CD4-positive, alpha-beta T cell (primary cell): ENCODE measurements at regions of chr17 and their contacts with region 1.

Region 1: DNA sequence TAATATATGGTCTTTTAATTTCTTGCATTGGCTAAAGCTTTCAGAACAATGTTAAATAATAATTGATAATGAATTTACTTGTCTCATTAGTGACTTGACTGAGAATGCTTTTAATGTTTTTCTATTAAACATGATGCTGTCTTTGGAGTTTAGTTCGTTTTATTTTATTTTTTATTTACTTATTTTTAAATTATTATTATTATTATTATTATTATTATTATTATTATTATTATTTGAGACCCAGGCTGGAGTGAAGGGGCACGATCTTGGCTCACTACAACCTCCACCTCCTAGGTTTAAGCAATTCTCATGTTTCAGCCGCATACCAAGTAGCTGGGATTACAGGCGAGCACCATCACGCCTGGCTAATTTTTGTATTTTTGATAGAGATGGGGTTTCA is 4.4 kb downstream of the OR3A3 start:
- DNase-seq: no peak
- ATAC-seq: no peak
- H3K4me3 ChIP-seq: no peak overlapping the region
- H3K4me3 Mint-ChIP-seq: no peak overlapping the region
- H3K27ac ChIP-seq: no peak overlapping the region
- H3K27ac Mint-ChIP-seq: no peak overlapping the region
- H3K4me1 ChIP-seq: no peaks in the 10 kb centered on the region
- H3K4me1 Mint-ChIP-seq: no peaks in the 10 kb centered on the region
- H3K27me3 ChIP-seq: peaks cover 2 to 3% of the 10 kb centered on the region in 2 experiments
- H3K27me3 Mint-ChIP-seq: peaks cover 20% of the 10 kb centered on the region
- CTCF ChIP-seq: no peak

Region 2: DNA sequence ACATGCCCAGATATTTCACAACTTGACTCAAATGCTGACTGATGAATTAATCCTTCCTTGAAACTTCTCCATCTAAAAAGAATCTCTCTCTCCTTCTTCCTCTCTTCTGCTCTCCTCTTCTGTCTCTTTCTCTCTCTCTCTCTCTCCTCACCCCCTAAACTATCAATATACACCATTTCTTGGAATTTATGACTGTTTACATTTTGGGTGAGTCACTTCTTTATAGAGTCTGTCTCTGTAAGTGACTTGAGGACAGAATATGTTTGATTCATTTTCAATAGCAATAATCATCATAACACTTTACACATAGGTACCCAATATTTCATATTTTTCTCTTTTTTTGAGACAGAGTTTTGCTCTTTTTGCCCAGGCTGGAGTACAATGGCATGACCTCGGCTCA is 132.7 kb before region 1 on chr17:
- CTCF ChIA-PET with region 1: no interaction called
- POLR2A ChIA-PET with region 1: no interaction called
- intact Hi-C with region 1: loop called in 1 of 2 experiments (anchors 10 kb)
- DNase-seq: no peak
- ATAC-seq: no peak
- H3K4me3 ChIP-seq: no peak overlapping the region
- H3K4me3 Mint-ChIP-seq: no peak overlapping the region
- H3K27ac ChIP-seq: no peak overlapping the region
- H3K27ac Mint-ChIP-seq: no peak overlapping the region
- H3K4me1 ChIP-seq: no peaks in the 10 kb centered on the region
- H3K4me1 Mint-ChIP-seq: no peaks in the 10 kb centered on the region
- H3K27me3 ChIP-seq: no peaks in the 10 kb centered on the region
- H3K27me3 Mint-ChIP-seq: peaks cover 7% of the 10 kb centered on the region
- CTCF ChIP-seq: no peak

Region 3: DNA sequence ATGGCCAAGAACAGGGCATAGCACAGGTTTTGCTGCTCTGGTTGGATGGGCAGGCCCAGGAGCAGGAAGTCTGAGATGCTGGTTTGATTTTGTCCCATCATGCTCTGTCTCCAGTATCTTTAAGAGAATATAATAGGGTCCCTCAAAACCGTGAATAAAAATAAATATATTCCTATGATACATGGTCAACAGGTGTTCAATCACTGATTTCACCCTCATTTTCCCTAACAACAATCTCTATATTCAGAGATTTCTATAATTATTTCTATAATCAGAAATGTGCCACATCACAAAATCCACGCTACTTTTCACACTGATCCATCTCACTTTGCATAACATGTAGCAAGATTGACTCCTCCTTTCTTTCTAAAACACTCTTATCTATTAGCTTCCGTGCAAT is 18.1 kb after region 1 on chr17 and contains the start of gene OR1E2:
- CTCF ChIA-PET with region 1: no interaction called
- POLR2A ChIA-PET with region 1: no interaction called
- intact Hi-C with region 1: no loop called
- DNase-seq: no peak
- ATAC-seq: no peak
- H3K4me3 ChIP-seq: no peak within 1 kb of the TSS
- H3K4me3 Mint-ChIP-seq: no peak within 1 kb of the TSS
- H3K27ac ChIP-seq: no peak within 1 kb of the TSS
- H3K27ac Mint-ChIP-seq: no peak within 1 kb of the TSS
- H3K4me1 ChIP-seq: no peaks in the 10 kb centered on the region
- H3K4me1 Mint-ChIP-seq: no peaks in the 10 kb centered on the region
- H3K27me3 ChIP-seq: peaks cover 1 to 2% of the 10 kb centered on the region in 2 experiments
- H3K27me3 Mint-ChIP-seq: peaks cover 41% of the 10 kb centered on the region
- CTCF ChIP-seq: no peak
- total RNA-seq, gene OR1E2: not detected